Panc1 (cell line): ENCODE measurements at regions of chr11 and their contacts with region 1.

Region 1: DNA sequence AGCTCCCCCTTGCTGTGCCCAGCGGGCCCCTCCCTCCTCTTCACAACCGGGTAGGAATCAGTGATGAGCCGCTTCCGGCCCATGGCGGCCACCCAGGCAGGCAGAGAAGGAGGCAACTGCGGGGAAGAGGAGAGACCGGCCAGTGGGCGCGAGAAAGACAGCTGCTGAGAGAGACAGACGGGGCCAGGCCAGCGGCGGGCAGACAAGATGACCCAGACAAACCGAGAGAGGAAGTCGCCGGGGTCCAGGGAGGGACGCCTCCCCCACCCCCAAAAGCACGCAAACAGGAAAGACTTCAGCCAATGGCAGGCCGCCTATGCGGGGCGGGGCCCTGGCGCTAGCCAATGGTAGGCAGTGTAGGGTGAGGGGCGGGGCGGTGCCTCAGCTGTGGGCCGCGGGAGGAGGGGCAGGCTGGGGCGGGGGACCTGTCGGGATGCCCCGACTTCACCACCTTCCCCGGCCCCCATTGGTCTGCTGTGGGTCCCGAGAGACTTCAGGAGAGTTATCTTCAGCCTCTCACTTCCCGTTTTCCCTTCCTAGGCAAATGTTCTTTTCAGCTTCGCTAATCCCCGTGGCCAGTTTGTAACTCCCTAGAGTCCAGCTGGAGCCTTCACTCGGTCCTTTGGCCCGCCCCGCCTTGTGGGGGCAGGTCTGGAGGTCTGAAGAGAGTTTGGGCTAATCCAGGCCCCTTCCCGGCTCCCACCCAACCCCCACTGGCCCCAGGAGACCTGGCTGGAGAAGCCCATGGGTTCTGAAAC is at the start of gene POLD4:
- DNase-seq: no peak
- ATAC-seq: peak; percentile 87
- H3K4me3 ChIP-seq: peak within 1 kb of the TSS; percentile 67 to 74
- H3K27ac ChIP-seq: peak within 1 kb of the TSS; percentile 94
- H3K4me1 ChIP-seq: peaks cover 63% of the 10 kb centered on the region
- H3K27me3 ChIP-seq: no peaks in the 10 kb centered on the region
- CTCF ChIP-seq: no peak
- total RNA-seq, gene POLD4: 78.7 TPM

Region 2: DNA sequence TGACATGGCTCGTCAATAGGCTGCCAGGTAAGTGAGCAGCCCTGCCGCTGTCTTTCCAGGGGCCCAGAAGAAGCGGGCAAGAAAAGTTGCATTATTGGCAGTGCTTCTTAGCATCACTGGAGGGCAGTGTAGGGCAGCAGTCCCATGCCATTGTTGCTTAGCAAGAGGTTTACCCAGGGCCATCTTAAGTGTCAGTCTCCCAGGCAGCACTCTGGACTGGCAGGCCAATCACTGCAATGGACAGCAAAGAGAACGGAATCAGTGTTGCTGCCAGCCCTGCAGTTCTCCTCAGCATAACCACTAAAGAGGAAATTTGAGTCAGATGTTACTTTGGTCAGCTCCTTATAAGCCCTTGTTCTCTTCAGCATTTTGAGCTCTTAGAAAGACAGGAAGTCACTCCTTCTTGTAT is 100.7 kb before region 1 on chr11:
- CTCF ChIA-PET with region 1: interaction called, 8 read pairs
- POLR2A ChIA-PET with region 1: interaction called, 11 read pairs
- in situ Hi-C with region 1: no loop called
- intact Hi-C with region 1: no loop called
- DNase-seq: no peak
- ATAC-seq: peak; percentile 63
- H3K4me3 ChIP-seq: no peak overlapping the region
- H3K27ac ChIP-seq: no peak overlapping the region
- H3K4me1 ChIP-seq: no peaks in the 10 kb centered on the region
- H3K27me3 ChIP-seq: no peaks in the 10 kb centered on the region
- CTCF ChIP-seq: peak; percentile 73

Region 3: DNA sequence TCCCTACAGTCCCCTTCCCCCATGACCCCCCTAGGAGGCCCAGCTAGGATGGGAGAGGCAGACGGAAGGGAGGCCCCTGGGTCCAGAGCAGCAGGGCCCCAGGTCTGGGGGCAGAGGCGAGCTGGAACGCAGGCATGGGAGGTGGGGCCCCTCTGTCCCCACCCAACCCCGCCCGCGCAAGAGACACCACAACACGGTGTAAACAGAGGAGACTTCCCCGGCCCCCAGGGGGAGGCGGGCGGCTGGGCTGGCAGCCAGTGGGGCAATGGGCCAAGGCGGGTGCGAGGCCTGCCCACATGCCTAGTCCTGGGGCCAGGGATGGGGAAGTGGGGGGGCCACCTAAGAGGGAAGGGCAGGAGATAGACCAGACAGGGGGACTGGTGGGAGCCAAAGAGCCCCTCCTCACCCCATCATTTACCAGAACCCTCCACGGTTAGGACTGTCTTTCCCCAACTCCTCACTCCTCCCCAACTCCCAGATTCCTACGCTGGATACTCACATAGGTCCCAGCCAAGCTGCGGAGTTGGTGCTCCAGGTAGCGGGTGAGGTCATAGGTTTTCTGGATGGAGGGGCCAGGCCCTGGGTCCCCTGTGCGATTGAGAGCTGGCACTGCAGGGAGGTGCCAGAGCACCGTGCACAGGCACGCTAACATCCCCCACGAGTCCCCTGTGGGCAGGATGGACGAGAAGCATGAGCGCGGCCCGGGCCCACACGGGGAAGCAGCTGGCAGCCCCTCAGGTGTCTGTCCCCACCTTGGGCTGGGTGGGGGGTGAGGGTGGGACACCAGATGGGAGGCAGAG is 13.7 kb after region 1 on chr11:
- CTCF ChIA-PET with region 1: interaction called, 23 read pairs
- POLR2A ChIA-PET with region 1: no interaction called
- in situ Hi-C with region 1: no loop called
- intact Hi-C with region 1: no loop called
- DNase-seq: no peak
- ATAC-seq: no peak
- H3K4me3 ChIP-seq: no peak overlapping the region
- H3K27ac ChIP-seq: no peak overlapping the region
- H3K4me1 ChIP-seq: peaks cover 39% of the 10 kb centered on the region
- H3K27me3 ChIP-seq: no peaks in the 10 kb centered on the region
- CTCF ChIP-seq: no peak

Region 4: DNA sequence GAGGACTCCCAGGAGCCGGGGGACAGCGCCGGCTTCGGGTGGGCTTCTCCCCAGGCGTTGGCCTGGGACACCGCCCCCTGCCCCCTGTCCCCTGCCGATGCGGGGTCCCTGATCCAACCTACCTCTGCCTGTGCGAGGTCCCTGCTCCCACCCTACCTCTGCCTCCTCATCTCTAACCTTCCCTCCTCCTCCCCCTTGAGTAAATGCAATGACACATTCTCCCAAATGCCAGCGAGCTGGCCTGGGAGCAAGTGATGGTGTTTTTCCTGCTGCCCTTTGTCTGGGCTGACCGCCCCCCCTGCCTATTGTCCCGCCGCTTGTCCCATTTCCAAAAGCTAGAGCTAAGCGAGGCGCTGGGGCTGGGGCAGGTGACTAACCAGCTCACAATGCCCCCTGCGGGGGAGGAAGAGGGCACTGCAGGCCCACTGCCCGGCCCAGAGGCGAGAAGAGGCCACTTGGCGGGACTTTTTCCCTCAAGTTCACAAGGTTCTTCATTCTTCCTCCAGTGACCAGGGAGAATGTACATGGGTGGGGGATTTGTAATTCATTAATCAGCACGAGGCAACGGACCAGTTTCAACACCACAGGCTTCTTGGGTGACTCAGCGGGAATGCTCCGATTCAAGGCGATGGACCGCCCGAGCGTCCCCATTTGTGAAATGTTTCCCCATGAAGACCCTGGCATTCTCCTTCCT is 20.6 kb after region 1 on chr11:
- CTCF ChIA-PET with region 1: interaction called, 207 read pairs
- POLR2A ChIA-PET with region 1: interaction called, 32 read pairs
- in situ Hi-C with region 1: no loop called
- intact Hi-C with region 1: no loop called
- DNase-seq: peak; percentile 80
- ATAC-seq: peak; percentile 67
- H3K4me3 ChIP-seq: peak overlapping the region; percentile 65 to 69
- H3K27ac ChIP-seq: peak overlapping the region; percentile 98
- H3K4me1 ChIP-seq: peaks cover 73% of the 10 kb centered on the region
- H3K27me3 ChIP-seq: no peaks in the 10 kb centered on the region
- CTCF ChIP-seq: no peak; the same call in 1 of the 2 replicates

Region 5: GRCh38 chr11:67470337-67471007 is 117.0 kb after region 1 on chr11:
- CTCF ChIA-PET with region 1: interaction called, 3 read pairs
- POLR2A ChIA-PET with region 1: interaction called, 19 read pairs
- in situ Hi-C with region 1: no loop called
- intact Hi-C with region 1: no loop called
- DNase-seq: no peak
- ATAC-seq: no peak
- H3K4me3 ChIP-seq: no peak overlapping the region
- H3K27ac ChIP-seq: no peak overlapping the region
- H3K4me1 ChIP-seq: peaks cover 26% of the 10 kb centered on the region
- H3K27me3 ChIP-seq: no peaks in the 10 kb centered on the region
- CTCF ChIP-seq: no peak